ENCODE measurements at regions of chr16 and their contacts with region 1.

Region 1: GRCh38 chr16:11715246-11715947 is 27.3 kb downstream of the TXNDC11 start:
- DNase-seq: no peak
- ATAC-seq: no peak

Region 2: GRCh38 chr16:10964039-10964890 is 751.1 kb before region 1 on chr16:
- intact Hi-C with region 1: loop called (anchors 10 kb)
- DNase-seq: peak; percentile 89
- ATAC-seq: peak; percentile 86

Region 3: DNA sequence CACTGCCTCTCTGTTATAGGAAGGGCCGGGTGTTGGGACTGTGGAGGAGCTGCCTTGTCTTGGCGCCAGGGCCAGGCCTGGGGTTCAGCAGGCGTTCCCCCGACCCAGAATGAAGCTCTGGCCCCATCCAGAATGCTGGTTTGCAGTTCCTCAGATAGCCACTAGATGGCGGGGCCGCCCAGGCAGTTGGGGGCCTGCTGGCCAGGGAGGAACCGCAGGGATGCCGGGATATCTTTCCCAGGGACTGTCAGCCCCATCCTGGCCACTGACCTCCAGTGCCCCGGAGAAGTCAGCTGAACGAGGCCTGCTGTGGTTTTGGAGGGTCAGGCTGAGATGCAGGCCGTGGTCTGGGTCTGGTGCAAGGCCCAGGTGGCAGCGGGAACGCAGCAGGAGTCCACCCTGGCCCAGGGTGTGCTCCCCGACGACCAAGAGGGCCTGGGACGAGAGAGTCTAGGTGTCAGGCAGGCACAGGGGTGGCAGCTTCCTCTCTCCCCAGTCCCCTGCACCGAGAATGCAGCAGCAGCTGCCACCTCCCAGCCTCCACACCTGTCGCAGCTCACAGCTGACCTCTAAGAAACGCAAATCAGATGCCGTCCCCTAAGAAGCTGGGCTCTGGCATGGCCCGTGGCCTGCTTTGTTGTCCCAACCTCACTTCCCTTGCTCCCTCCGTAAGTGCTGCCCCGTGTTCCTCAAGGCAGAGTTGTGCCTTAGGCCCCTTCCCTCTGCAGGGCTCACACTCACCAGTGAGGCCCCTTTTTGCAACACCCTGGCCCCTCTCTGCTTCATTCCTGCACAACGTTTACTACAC is 319.0 kb before region 1 on chr16:
- intact Hi-C with region 1: loop called (anchors 2 kb)
- DNase-seq: peak; percentile 85
- ATAC-seq: peak; percentile 71

Region 4: GRCh38 chr16:11535471-11535870 is 179.9 kb before region 1 on chr16:
- intact Hi-C with region 1: loop called (anchors 2 kb)
- DNase-seq: no peak
- ATAC-seq: no peak

Region 5: GRCh38 chr16:11669380-11670146 is 45.8 kb before region 1 on chr16:
- intact Hi-C with region 1: loop called (anchors 5 kb)
- DNase-seq: peak; percentile 83
- ATAC-seq: peak; percentile 24

Region 6: GRCh38 chr16:11783319-11784037 is 68.1 kb after region 1 on chr16:
- intact Hi-C with region 1: no loop called
- DNase-seq: no peak
- ATAC-seq: peak; percentile 51

Region 7: GRCh38 chr16:12449795-12450194 is 734.4 kb after region 1 on chr16:
- intact Hi-C with region 1: no loop called
- DNase-seq: no peak
- ATAC-seq: no peak

Measured in Right ventricle myocardium inferior (tissue), 1 donor.